Heart right ventricle (tissue), 16 donors: ENCODE measurements at regions of chr5 and their contacts with region 1.

Region 1: GRCh38 chr5:34656001-34656699 is at the start of gene RAI14:
- DNase-seq: peak; percentile 76 to 79
- ATAC-seq: peak; percentile 88 to 94 (median 90)
- H3K4me3 ChIP-seq: peak within 1 kb of the TSS; percentile 61 to 96 (median 89)
- H3K27ac ChIP-seq: peak within 1 kb of the TSS; percentile 72 to 98 (median 91)
- H3K4me1 ChIP-seq: peaks cover 0 to 36% (median 19%) of the 10 kb centered on the region in 9 donors
- H3K27me3 ChIP-seq: peaks cover 0 to 45% (median 0%) of the 10 kb centered on the region in 7 donors
- CTCF ChIP-seq: peak in 3 of 9 donors; percentile 25 to 49 (median 42)
- total RNA-seq, gene RAI14: 4.9 to 25.5 (median 11.7) TPM

Region 2: GRCh38 chr5:34522599-34523386 is 133.4 kb before region 1 on chr5:
- intact Hi-C with region 1: loop called in 6 of 10 experiments (anchors 5 to 10 kb)
- DNase-seq: peak; percentile 20 to 79
- ATAC-seq: peak in 7 of 8 donors; percentile 78 to 88 (median 83)
- H3K4me3 ChIP-seq: no peak overlapping the region
- H3K27ac ChIP-seq: peak overlapping the region in 1 of 10 donors; percentile 7
- H3K4me1 ChIP-seq: peaks cover 0 to 39% (median 4%) of the 10 kb centered on the region in 9 donors
- H3K27me3 ChIP-seq: no peaks in the 10 kb centered on the region
- CTCF ChIP-seq: peak; percentile 59 to 84 (median 76)

Region 3: GRCh38 chr5:34609951-34610441 is 46.2 kb before region 1 on chr5:
- intact Hi-C with region 1: loop called in 1 of 10 experiments (anchors 5 kb)
- DNase-seq: no peak
- ATAC-seq: no peak
- H3K4me3 ChIP-seq: no peak overlapping the region
- H3K27ac ChIP-seq: peak overlapping the region in 1 of 10 donors; percentile 73
- H3K4me1 ChIP-seq: peaks cover 0 to 29% (median 7%) of the 10 kb centered on the region in 9 donors
- H3K27me3 ChIP-seq: no peaks in the 10 kb centered on the region
- CTCF ChIP-seq: no peak

Region 4: GRCh38 chr5:34767180-34767579 is 111.0 kb after region 1 on chr5:
- intact Hi-C with region 1: loop called in 1 of 10 experiments (anchors 10 kb)
- DNase-seq: no peak
- ATAC-seq: no peak
- H3K4me3 ChIP-seq: no peak overlapping the region
- H3K27ac ChIP-seq: no peak overlapping the region
- H3K4me1 ChIP-seq: peaks cover 0 to 21% (median 8%) of the 10 kb centered on the region in 9 donors
- H3K27me3 ChIP-seq: no peaks in the 10 kb centered on the region
- CTCF ChIP-seq: no peak

Region 5: DNA sequence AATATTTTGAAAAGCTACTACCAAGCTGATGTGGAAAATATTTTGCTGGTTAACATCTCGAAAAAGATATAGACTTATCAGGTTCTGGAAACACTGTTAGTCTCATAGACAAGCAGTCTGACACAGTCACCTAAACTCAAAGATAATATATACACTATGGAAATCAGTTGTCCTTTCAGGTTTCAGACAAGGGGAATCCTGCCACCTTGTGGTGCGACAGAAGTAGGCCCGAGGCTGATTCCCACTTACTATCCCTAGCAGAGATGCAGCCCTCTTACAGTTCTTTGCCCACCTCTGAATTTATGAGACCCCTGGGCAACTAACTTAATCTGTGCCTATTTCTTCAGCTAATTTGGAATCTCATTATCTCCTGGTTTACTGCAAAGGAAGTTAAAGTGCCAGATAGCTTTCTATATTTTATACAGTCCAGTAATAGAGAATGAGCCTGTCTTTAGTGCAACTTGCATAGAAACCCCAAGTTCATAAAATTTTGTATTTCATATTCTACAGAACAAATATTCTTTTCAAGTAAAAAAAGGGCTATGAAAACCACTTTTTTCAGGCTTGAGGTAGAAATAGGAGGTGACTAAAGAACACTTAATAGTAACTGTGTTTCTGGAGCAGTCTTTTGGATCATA is 242.2 kb after region 1 on chr5:
- intact Hi-C with region 1: loop called in 3 of 10 experiments (anchors 10 kb)
- DNase-seq: peak; percentile 28 to 54
- ATAC-seq: peak; percentile 71 to 84 (median 76)
- H3K4me3 ChIP-seq: no peak overlapping the region
- H3K27ac ChIP-seq: no peak overlapping the region
- H3K4me1 ChIP-seq: no peaks in the 10 kb centered on the region
- H3K27me3 ChIP-seq: no peaks in the 10 kb centered on the region
- CTCF ChIP-seq: peak; percentile 81 to 95 (median 88)